A549 (cell line): ENCODE measurements at regions of chr5 and their contacts with region 1.

Region 1: DNA sequence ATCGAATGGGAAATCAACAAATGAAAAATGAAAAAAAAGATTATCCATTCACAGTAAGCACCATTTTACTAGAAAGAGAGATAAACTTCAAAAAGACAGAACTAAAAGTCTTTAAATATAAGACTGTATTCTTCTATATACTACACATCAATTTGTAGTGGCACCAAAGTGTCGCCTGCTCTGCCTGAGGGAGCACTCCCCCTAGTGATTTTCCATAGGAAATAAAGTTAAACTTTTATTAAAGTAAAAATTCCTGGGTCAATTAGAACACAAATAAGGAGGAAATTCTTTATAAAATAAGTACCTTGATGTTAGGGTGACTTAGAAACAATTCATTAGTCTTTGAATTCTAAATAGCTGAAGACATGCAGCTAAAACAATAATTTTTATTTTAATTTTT is 9.7 kb downstream of the RAD1 start:
- DNase-seq: peak in 1 of 2 experiments; percentile 27
- ATAC-seq: peak in 1 of 2 experiments; percentile 65; a peak in 2 of 6 replicates
- H3K4me3 ChIP-seq: no peak overlapping the region
- H3K27ac ChIP-seq: no peak overlapping the region
- H3K4me1 ChIP-seq: no peaks in the 10 kb centered on the region
- CTCF ChIP-seq: peak; percentile 69
- EP300 ChIP-seq: no peak
- POLR2A ChIP-seq: no peak
- RAD21 ChIP-seq: peak; percentile 57 to 58

Region 2: DNA sequence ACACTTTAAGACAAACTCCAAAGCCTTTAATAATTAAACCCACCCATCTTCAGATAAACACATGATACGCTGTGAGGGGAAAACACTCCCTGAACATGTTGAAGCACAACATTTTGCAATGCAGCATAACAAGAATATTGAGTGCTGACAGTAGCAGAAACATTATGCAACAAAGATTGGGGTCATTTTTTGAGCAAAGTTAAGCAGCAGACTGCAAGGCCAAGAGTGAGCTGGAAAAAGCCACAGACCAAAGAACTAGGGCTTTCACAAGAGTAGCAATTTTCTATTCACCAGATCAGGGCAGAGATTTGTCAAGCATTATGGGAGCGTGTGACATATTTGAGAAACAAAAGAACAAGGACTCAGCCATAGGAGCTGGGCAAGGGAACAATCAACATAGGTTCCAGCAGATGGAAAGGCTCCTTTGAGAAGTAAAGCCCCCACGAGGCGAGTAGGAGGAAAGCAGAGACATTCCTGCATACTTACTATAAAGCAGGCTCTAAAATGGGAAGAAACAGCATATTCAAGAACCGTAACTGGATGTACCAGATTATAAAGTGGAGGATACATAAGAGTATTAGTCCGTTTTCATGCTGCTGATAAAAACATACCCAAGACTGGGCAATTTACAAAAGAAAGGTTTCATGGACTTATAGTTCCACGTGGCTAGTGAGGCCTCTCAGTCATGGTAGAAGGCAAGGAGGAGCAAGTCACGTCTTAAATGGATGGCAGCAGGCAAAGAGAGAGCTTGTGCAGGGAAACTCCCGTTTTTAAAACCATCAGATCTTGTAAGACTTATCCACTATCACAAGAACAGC is 71.4 kb before region 1 on chr5:
- CTCF ChIA-PET with region 1: no interaction called
- POLR2A ChIA-PET with region 1: no interaction called
- DNase-seq: no peak
- ATAC-seq: no peak
- H3K4me3 ChIP-seq: no peak overlapping the region
- H3K27ac ChIP-seq: no peak overlapping the region
- H3K4me1 ChIP-seq: no peaks in the 10 kb centered on the region
- CTCF ChIP-seq: no peak
- EP300 ChIP-seq: no peak
- POLR2A ChIP-seq: no peak
- RAD21 ChIP-seq: no peak

Region 3: DNA sequence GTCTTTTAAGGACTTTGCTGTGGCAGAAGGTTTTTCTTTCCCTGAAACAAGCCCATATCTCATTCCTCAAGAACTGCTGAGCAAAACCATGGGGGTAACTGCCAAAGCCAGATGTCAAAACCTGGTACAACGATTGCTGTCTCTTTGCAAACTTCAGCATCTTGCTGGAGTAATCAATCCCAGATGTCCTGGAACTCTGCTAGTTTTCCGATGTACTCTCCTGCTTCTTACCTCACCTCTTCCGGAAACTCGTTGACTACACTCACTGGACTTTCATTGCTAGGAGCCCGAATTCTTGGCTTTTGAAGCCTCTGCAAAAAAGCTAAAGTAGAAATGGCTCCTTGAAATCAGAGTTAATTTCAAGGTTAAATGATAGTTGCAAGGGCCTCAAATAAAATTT is 13.6 kb before region 1 on chr5:
- CTCF ChIA-PET with region 1: interaction called, 11 read pairs
- POLR2A ChIA-PET with region 1: no interaction called
- DNase-seq: no peak
- ATAC-seq: no peak
- H3K4me3 ChIP-seq: no peak overlapping the region
- H3K27ac ChIP-seq: no peak overlapping the region
- H3K4me1 ChIP-seq: no peaks in the 10 kb centered on the region
- CTCF ChIP-seq: no peak
- EP300 ChIP-seq: no peak
- POLR2A ChIP-seq: no peak
- RAD21 ChIP-seq: no peak